ENCODE measurements at regions of chr21 and their contacts with region 1.

Region 1: DNA sequence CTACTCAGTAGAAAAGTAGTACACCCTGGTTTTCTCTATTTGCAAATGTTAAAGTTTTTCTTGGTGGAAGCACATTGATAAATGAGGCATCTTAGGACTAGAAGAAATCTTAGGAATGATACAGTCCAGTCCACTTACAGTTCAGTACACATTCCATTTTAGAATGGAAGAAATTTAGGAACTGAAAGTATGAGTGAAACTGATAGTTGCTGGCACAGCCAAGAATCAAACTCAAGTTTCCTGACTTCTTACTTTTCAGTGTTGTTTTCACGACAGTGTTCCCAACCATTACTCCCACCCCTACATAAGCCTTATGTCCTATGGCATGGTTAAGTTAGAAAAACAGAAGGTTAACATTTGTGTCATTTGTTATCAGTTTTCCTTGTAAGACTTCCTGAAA is 258.5 kb downstream of the BACH1 start:
- DNase-seq: no peak
- ATAC-seq: peak in 1 of 4 donors; percentile 37
- H3K4me3 ChIP-seq: no peak overlapping the region
- H3K27ac ChIP-seq: peak overlapping the region in 1 of 12 donors; percentile 59
- H3K4me1 ChIP-seq: no peaks in the 10 kb centered on the region
- H3K27me3 ChIP-seq: no peaks in the 10 kb centered on the region
- CTCF ChIP-seq: no peak
- POLR2A ChIP-seq: no peak

Region 2: GRCh38 chr21:27606422-27606821 is 1950.8 kb before region 1 on chr21:
- intact Hi-C with region 1: no loop called
- DNase-seq: no peak
- ATAC-seq: peak in 1 of 4 donors; percentile 20
- H3K4me3 ChIP-seq: no peak overlapping the region
- H3K27ac ChIP-seq: no peak overlapping the region
- H3K4me1 ChIP-seq: no peaks in the 10 kb centered on the region
- H3K27me3 ChIP-seq: no peaks in the 10 kb centered on the region
- CTCF ChIP-seq: no peak
- POLR2A ChIP-seq: no peak

Region 3: DNA sequence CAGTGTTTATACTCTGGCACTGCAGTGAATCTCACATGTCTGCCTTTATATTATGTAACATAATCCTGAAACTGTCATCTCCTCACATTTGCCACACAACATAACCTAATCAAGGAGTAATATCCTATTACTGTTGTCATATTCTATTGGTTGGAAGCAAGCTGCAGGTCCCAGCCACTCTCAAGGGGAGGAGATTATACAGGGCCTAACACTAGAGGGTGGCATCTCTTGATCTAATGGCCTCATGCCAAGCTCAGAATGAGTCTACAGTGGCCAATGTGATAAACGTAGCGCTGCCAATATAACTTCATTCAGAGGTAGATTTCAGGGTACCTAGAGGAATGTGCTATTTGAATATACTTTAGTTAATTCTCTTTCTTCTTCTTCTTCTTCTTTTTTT is 91.7 kb before region 1 on chr21:
- intact Hi-C with region 1: no loop called
- DNase-seq: no peak
- ATAC-seq: no peak
- H3K4me3 ChIP-seq: no peak overlapping the region
- H3K27ac ChIP-seq: no peak overlapping the region
- H3K4me1 ChIP-seq: no peaks in the 10 kb centered on the region
- H3K27me3 ChIP-seq: no peaks in the 10 kb centered on the region
- CTCF ChIP-seq: no peak
- POLR2A ChIP-seq: no peak

Region 4: GRCh38 chr21:29499734-29500343 is 57.4 kb before region 1 on chr21:
- intact Hi-C with region 1: loop called in 1 of 10 experiments (anchors 10 kb)
- DNase-seq: no peak
- ATAC-seq: no peak
- H3K4me3 ChIP-seq: no peak overlapping the region
- H3K27ac ChIP-seq: no peak overlapping the region
- H3K4me1 ChIP-seq: no peaks in the 10 kb centered on the region
- H3K27me3 ChIP-seq: no peaks in the 10 kb centered on the region
- CTCF ChIP-seq: peak in 9 of 12 donors; percentile 8 to 39 (median 31)
- POLR2A ChIP-seq: no peak

Region 5: GRCh38 chr21:29616352-29616751 is 59.2 kb after region 1 on chr21:
- intact Hi-C with region 1: no loop called
- DNase-seq: no peak
- ATAC-seq: no peak
- H3K4me3 ChIP-seq: no peak overlapping the region
- H3K27ac ChIP-seq: no peak overlapping the region
- H3K4me1 ChIP-seq: no peaks in the 10 kb centered on the region
- H3K27me3 ChIP-seq: no peaks in the 10 kb centered on the region
- CTCF ChIP-seq: no peak
- POLR2A ChIP-seq: no peak